ENCODE measurements at regions of chr12 and their contacts with region 1.

Region 1: GRCh38 chr12:98998697-98999299 is 353.7 kb downstream of the APAF1 start:
- DNase-seq: no peak
- ATAC-seq: peak; percentile 47 to 86 (median 71)
- H3K4me3 ChIP-seq: no peak overlapping the region
- H3K27ac ChIP-seq: no peak overlapping the region
- H3K4me1 ChIP-seq: no peaks in the 10 kb centered on the region
- H3K27me3 ChIP-seq: peaks cover 0 to 3% (median 0%) of the 10 kb centered on the region in 9 donors
- CTCF ChIP-seq: peak; percentile 51 to 75 (median 66)
- POLR2A ChIP-seq: no peak

Region 2: GRCh38 chr12:98416845-98417244 is 582.0 kb before region 1 on chr12:
- intact Hi-C with region 1: no loop called
- DNase-seq: no peak
- ATAC-seq: peak in 1 of 4 donors; percentile 43
- H3K4me3 ChIP-seq: no peak overlapping the region
- H3K27ac ChIP-seq: peak overlapping the region in 5 of 12 donors; percentile 12 to 65 (median 40)
- H3K4me1 ChIP-seq: peaks cover 0 to 30% (median 16%) of the 10 kb centered on the region in 12 donors
- H3K27me3 ChIP-seq: no peaks in the 10 kb centered on the region
- CTCF ChIP-seq: peak in 7 of 12 donors; percentile 10 to 44 (median 21)
- POLR2A ChIP-seq: no peak

Region 3: DNA sequence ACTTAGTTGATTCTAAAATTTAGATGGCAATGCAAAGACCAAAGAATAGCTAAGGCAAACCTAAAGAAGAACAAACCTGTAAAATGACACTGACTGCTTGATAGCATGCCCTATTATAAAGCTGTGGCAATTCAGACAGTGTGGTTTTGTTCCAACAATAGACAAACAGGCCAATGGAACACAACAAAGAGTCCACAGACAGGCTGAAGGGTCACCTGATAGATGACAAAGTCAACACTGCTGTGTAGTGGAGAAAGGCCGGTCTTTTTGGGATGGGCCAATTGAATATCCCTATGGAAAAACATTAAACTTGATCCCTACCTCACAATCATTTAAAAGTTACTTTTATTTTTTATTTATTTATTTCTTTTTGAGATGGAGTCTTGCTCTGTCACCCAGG is 439.1 kb before region 1 on chr12:
- intact Hi-C with region 1: loop called in 4 of 10 experiments (anchors 10 kb)
- DNase-seq: no peak
- ATAC-seq: no peak
- H3K4me3 ChIP-seq: no peak overlapping the region
- H3K27ac ChIP-seq: no peak overlapping the region
- H3K4me1 ChIP-seq: no peaks in the 10 kb centered on the region
- H3K27me3 ChIP-seq: no peaks in the 10 kb centered on the region
- CTCF ChIP-seq: no peak
- POLR2A ChIP-seq: no peak

Region 4: DNA sequence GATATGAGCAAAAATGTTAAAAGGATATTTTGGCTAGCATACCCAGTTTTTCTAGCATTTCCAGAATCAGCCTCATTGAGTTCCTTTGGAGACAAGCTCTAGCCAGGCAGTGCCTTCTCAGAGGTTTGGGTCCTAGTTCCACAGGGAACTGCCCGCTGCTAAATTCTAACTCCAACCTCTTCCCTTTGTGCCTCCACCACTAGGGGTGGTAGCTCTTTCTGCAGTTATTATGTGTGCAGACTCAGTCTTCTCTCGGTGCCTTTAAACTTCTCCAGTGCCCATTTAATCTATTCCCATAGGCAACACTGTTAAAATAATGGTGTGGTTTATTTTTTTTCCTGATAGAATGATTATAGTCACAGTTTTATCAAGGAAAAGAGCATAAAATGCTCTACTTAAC is 426.8 kb before region 1 on chr12:
- intact Hi-C with region 1: loop called in 5 of 10 experiments (anchors 5 to 10 kb)
- DNase-seq: no peak
- ATAC-seq: no peak
- H3K4me3 ChIP-seq: no peak overlapping the region
- H3K27ac ChIP-seq: no peak overlapping the region
- H3K4me1 ChIP-seq: peaks cover 0 to 3% (median 0%) of the 10 kb centered on the region in 12 donors
- H3K27me3 ChIP-seq: no peaks in the 10 kb centered on the region
- CTCF ChIP-seq: peak in 3 of 12 donors; percentile 10 to 19 (median 16)
- POLR2A ChIP-seq: no peak

Region 5: GRCh38 chr12:98698603-98699463 is 300.0 kb before region 1 on chr12:
- intact Hi-C with region 1: loop called (anchors 2 to 10 kb)
- DNase-seq: peak; percentile 28 to 67 (median 56)
- ATAC-seq: peak; percentile 51 to 95 (median 92)
- H3K4me3 ChIP-seq: no peak overlapping the region
- H3K27ac ChIP-seq: peak overlapping the region in 2 of 12 donors; percentile 8 to 50
- H3K4me1 ChIP-seq: peaks cover 0 to 21% (median 9%) of the 10 kb centered on the region in 12 donors
- H3K27me3 ChIP-seq: no peaks in the 10 kb centered on the region
- CTCF ChIP-seq: peak; percentile 26 to 65 (median 48)
- POLR2A ChIP-seq: no peak

Region 6: GRCh38 chr12:98725476-98726247 is 273.1 kb before region 1 on chr12:
- intact Hi-C with region 1: loop called in 3 of 10 experiments (anchors 10 kb)
- DNase-seq: no peak
- ATAC-seq: peak in 2 of 4 donors; percentile 52 to 56
- H3K4me3 ChIP-seq: no peak overlapping the region
- H3K27ac ChIP-seq: no peak overlapping the region
- H3K4me1 ChIP-seq: no peaks in the 10 kb centered on the region
- H3K27me3 ChIP-seq: no peaks in the 10 kb centered on the region
- CTCF ChIP-seq: peak in 9 of 12 donors; percentile 16 to 46 (median 25)
- POLR2A ChIP-seq: no peak

Region 7: DNA sequence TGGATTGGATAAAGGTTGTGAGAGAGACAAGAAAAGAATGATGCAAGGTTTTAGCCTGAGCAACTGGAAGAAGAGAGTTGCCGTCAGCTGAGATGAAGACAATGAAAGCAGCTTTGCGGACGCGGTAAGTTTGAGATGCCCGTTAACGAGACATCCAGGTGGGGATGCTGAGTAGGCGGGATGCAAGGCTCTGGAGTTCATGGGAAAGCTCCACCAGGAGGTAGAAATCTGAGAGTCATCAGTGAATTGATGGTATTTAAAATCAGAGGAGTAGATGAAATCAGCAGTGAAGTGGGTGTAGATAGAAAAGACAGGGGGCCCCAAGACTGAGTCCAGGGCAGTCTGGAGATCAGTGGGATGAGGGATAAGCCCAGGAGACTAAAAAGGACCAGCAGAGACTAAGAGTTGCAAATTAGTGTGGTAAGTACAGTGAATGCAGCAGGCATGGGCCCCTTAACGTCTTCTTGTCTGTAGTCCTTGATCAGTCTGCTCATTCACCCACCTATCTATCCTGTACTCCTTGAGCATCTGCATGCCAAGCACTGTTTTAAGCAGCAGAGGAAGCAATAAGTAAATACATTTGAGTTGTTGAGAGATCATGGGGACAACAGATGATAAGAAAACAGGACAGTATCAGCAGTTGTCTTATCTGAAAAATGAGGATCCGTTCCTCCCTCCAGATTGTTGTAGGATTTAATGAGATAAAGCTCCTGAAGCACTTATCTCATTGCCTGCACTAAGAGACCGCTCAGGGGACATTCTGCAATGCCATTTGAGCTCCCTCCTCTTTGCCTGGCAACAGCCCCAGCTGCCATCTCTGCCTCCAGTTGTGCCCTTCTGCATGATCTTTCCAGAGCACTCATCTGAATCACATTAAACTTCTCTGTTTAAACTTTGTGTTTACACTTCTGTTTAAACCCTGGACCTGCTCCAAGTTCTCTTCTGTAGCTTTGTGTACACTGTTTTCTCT is 262.2 kb before region 1 on chr12:
- intact Hi-C with region 1: loop called in 1 of 10 experiments (anchors 10 kb)
- DNase-seq: no peak
- ATAC-seq: no peak
- H3K4me3 ChIP-seq: no peak overlapping the region
- H3K27ac ChIP-seq: no peak overlapping the region
- H3K4me1 ChIP-seq: no peaks in the 10 kb centered on the region
- H3K27me3 ChIP-seq: peaks cover 0 to 7% (median 0%) of the 10 kb centered on the region in 9 donors
- CTCF ChIP-seq: no peak
- POLR2A ChIP-seq: no peak

Region 8: GRCh38 chr12:99087278-99087677 is 88.5 kb after region 1 on chr12:
- intact Hi-C with region 1: no loop called
- DNase-seq: no peak
- ATAC-seq: no peak
- H3K4me3 ChIP-seq: no peak overlapping the region
- H3K27ac ChIP-seq: no peak overlapping the region
- H3K4me1 ChIP-seq: no peaks in the 10 kb centered on the region
- H3K27me3 ChIP-seq: no peaks in the 10 kb centered on the region
- CTCF ChIP-seq: no peak
- POLR2A ChIP-seq: no peak

Measured in heart left ventricle (tissue), 16 donors.